Activated CD8-positive, alpha-beta T cell treated with anti-CD3 and anti-CD28 coated beads for 36 hours (primary cell): ENCODE measurements at regions of chr15 and their contacts with region 1.

Region 1: DNA sequence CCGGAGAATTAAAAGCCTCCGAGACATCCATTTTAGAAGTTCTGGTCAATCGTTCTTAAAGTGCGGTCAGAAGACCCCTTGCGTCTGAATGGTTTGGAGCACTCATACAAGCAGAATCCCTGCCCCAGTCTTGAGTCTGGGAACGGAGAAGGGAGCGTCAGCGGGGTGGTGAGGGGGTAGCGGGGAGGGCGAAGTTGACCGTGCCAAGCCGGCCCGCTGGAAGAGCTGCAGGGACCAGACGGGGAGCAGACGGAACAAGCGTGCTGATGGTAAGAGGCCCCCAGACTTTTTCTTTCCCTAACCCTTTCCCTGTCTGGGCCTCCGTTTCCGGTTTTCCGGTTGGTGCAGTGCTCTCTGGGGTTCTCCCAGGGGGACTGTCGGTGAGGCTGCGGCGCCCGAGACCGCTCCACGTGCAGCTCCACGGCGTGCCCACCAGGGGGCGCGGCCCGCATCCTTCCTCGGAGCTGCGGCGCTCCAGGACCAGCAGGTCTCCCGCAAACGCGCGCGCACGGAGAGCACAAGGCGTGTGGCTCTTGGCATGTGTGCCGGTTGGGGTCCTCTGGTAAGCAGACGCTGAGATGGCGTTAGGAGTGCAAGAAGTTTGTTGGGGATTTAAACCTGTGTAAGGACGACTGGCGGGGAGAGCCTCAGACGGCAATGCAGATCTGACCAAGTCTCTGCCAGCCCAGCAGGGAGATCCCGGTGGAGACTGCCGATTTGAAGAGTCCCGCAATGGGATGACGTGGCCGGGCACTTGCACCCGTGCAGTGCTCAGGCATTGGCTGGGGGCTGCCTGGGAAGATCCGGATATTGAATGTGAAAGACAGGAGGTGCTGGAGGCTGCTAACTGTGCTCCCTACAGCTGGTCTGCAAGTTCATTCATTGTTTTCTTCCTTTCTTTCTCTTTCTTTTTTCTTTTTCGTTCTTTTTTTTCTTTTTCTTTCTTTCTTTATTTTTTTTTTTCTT is 19.2 kb upstream of the CORO2B start:
- DNase-seq: peak; percentile 72
- ATAC-seq: peak; percentile 93
- H3K4me3 Mint-ChIP-seq: peak overlapping the region; percentile 51
- H3K27ac Mint-ChIP-seq: no peak overlapping the region
- H3K4me1 Mint-ChIP-seq: peaks cover 14% of the 10 kb centered on the region
- H3K27me3 Mint-ChIP-seq: peaks cover 36% of the 10 kb centered on the region
- CTCF ChIP-seq: peak; percentile 97

Region 2: DNA sequence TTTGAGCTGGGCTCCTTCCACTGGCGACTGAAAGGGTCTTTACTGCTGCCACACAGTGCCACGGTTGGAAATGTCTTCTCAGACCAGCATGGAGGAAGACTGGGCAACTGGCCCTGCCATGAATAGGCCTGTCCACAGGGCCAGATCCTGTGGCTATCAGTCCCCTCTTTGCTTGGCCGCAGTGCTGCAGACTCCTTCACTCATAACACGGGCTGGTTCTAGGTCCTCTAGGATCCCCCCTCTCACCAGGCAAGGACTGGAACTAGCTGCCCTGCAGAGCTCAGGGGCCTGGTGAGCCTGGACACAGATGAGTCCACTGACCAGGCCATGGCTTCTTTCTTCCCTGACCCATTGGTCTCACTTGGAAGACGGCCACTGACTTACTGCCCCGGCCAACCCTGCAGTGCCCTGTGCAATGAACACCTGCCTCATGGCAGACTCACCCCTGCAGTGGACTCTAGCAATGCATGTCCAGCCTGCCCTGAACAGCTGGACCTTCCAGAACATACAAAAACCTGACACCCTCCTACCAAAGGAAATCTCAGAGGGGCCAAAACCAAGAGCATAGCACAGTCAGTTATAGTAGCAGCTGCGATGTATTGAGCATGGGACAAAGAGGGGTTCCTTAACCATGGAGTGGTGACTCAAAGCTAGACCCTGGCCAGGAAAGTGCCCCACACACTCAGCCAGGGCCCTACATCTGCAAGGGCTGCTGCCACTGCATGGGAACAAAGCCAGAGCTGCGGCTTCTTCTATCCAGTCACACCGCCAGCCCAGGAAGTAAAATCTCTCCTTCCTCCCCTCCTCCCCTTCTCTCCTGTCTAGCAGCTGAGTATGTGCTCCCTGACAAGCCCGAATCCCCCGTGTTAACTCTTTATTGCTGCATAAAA is 55.6 kb before region 1 on chr15:
- CTCF ChIA-PET with region 1: no interaction called
- POLR2A ChIA-PET with region 1: no interaction called
- intact Hi-C with region 1: no loop called
- DNase-seq: no peak
- ATAC-seq: no peak
- H3K4me3 Mint-ChIP-seq: no peak overlapping the region
- H3K27ac Mint-ChIP-seq: no peak overlapping the region
- H3K4me1 Mint-ChIP-seq: peaks cover 6% of the 10 kb centered on the region
- H3K27me3 Mint-ChIP-seq: no peaks in the 10 kb centered on the region
- CTCF ChIP-seq: no peak

Region 3: GRCh38 chr15:68572921-68573320 is 13.3 kb after region 1 on chr15:
- CTCF ChIA-PET with region 1: interaction called, 19 read pairs
- POLR2A ChIA-PET with region 1: no interaction called
- intact Hi-C with region 1: no loop called
- DNase-seq: no peak
- ATAC-seq: no peak
- H3K4me3 Mint-ChIP-seq: no peak overlapping the region
- H3K27ac Mint-ChIP-seq: no peak overlapping the region
- H3K4me1 Mint-ChIP-seq: peaks cover 3% of the 10 kb centered on the region
- H3K27me3 Mint-ChIP-seq: peaks cover 50% of the 10 kb centered on the region
- CTCF ChIP-seq: no peak

Region 4: GRCh38 chr15:68672781-68673205 is 113.2 kb after region 1 on chr15:
- CTCF ChIA-PET with region 1: interaction called, 79 read pairs
- POLR2A ChIA-PET with region 1: interaction called, 3 read pairs
- intact Hi-C with region 1: loop called (anchors 2 kb)
- DNase-seq: no peak
- ATAC-seq: no peak
- H3K4me3 Mint-ChIP-seq: no peak overlapping the region
- H3K27ac Mint-ChIP-seq: no peak overlapping the region
- H3K4me1 Mint-ChIP-seq: peaks cover 3% of the 10 kb centered on the region
- H3K27me3 Mint-ChIP-seq: peaks cover 7% of the 10 kb centered on the region
- CTCF ChIP-seq: no peak

Region 5: GRCh38 chr15:68924866-68925560 is 365.4 kb after region 1 on chr15:
- CTCF ChIA-PET with region 1: interaction called, 13 read pairs
- POLR2A ChIA-PET with region 1: no interaction called
- intact Hi-C with region 1: no loop called
- DNase-seq: peak; percentile 83
- ATAC-seq: no peak
- H3K4me3 Mint-ChIP-seq: no peak overlapping the region
- H3K27ac Mint-ChIP-seq: no peak overlapping the region
- H3K4me1 Mint-ChIP-seq: no peaks in the 10 kb centered on the region
- H3K27me3 Mint-ChIP-seq: peaks cover 19% of the 10 kb centered on the region
- CTCF ChIP-seq: peak; percentile 76